ENCODE measurements at regions of chr1 and their contacts with region 1.

Region 1: DNA sequence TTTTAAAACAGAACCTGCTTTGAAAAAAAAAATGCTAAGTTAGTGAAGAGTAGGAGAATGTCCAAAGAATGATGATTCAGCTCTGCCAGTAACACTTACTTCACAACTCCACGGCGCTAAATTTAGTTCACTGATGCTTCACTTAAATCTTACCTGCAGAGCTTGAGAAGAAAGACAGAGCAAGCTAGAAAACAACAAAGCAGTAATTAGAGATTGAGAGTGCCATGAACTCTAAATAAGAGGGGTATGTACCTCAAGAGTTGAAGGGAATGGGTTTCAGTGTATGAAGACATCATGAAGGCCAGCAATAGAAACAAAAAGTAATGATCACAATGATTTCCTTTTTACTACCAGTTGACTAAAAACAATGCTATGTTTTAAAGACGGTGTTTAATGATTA is 32.8 kb downstream of the EPRS1 start:
- DNase-seq: no peak
- H3K4me3 ChIP-seq: no peak overlapping the region
- H3K27ac ChIP-seq: peak overlapping the region; percentile 12 to 20; a peak in 3 of 4 replicates
- H3K4me1 ChIP-seq: peaks cover 0 to 4% of the 10 kb centered on the region in 2 experiments; a peak in 2 of 4 replicates
- H3K27me3 ChIP-seq: no peaks in the 10 kb centered on the region
- CTCF ChIP-seq: no peak
- EP300 ChIP-seq: no peak
- RAD21 ChIP-seq: no peak

Region 2: DNA sequence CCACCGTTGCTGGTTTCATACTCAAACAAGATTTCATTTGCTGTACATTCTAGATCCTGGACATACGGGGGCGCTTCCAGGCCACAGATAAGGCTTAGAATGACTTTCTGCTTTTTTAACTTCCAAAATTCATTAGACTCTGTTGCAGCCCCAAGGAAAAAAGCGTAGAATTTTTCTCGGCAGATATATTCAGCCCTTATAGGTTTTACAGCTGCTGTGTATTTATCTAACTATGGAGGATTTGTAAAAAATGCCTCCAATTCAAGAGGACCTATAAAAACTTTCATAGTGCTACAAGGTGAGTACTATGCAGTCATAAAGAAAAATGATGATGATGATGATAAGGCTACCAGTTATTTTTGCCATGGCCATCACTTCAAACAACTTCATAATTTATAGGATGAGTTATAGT is 136.7 kb before region 1 on chr1:
- CTCF ChIA-PET with region 1: no interaction called
- POLR2A ChIA-PET with region 1: no interaction called
- DNase-seq: no peak
- H3K4me3 ChIP-seq: no peak overlapping the region
- H3K27ac ChIP-seq: no peak overlapping the region
- H3K4me1 ChIP-seq: no peaks in the 10 kb centered on the region; a peak in 1 of 4 replicates
- H3K27me3 ChIP-seq: no peaks in the 10 kb centered on the region; the same call in 1 of the 2 replicates
- CTCF ChIP-seq: 0 out of 2 replicates have a peak, but pooled peaks have one; percentile 7
- EP300 ChIP-seq: no peak
- RAD21 ChIP-seq: peak; percentile 58

Region 3: GRCh38 chr1:219990782-219991510 is 22.6 kb before region 1 on chr1:
- CTCF ChIA-PET with region 1: interaction called, 17 read pairs
- POLR2A ChIA-PET with region 1: no interaction called
- DNase-seq: peak; percentile 27
- H3K4me3 ChIP-seq: no peak overlapping the region
- H3K27ac ChIP-seq: no peak overlapping the region
- H3K4me1 ChIP-seq: no peaks in the 10 kb centered on the region
- H3K27me3 ChIP-seq: no peaks in the 10 kb centered on the region
- CTCF ChIP-seq: peak; percentile 90
- EP300 ChIP-seq: no peak
- RAD21 ChIP-seq: peak; percentile 77

Measured in SK-N-SH (cell line).